CD4-positive, alpha-beta memory T cell (primary cell): ENCODE measurements at regions of chr2 and their contacts with region 1.

Region 1: GRCh38 chr2:156589381-156590079 is 153.4 kb downstream of the GPD2 start:
- DNase-seq: peak; percentile 31 to 48 (median 37)
- H3K4me3 ChIP-seq: no peak overlapping the region
- H3K4me3 Mint-ChIP-seq: no peak overlapping the region
- H3K27ac ChIP-seq: no peak overlapping the region
- H3K27ac Mint-ChIP-seq: peak overlapping the region in 1 of 7 donors; percentile 2
- H3K4me1 ChIP-seq: no peaks in the 10 kb centered on the region
- H3K4me1 Mint-ChIP-seq: peaks cover 0 to 2% (median under 1%) of the 10 kb centered on the region in 4 donors
- H3K27me3 ChIP-seq: no peaks in the 10 kb centered on the region
- H3K27me3 Mint-ChIP-seq: no peaks in the 10 kb centered on the region

Region 2: DNA sequence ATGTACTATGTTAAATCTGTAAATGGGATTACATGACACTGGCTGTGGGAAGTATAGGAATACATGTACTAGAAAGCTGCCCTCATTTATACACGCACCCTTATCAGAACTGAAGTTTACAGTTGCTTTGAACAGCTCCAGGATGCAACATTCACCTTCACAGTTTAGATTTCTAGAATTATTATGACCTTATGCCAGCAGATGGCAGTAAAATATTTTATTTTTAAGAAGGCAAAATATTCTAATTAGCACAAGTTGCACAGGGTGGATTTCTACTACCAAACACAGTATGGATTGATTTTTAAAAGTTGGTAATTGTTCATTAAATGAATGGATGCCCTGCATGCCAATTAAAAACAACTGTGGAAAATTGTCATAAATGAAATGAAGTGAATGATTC is 1220.6 kb before region 1 on chr2:
- CTCF ChIA-PET with region 1: interaction called, 5 read pairs
- POLR2A ChIA-PET with region 1: no interaction called
- intact Hi-C with region 1: loop called (anchors 1 kb)
- DNase-seq: peak in 2 of 5 donors; percentile 3 to 11
- H3K4me3 ChIP-seq: no peak overlapping the region
- H3K4me3 Mint-ChIP-seq: no peak overlapping the region
- H3K27ac ChIP-seq: no peak overlapping the region
- H3K27ac Mint-ChIP-seq: no peak overlapping the region
- H3K4me1 ChIP-seq: no peaks in the 10 kb centered on the region
- H3K4me1 Mint-ChIP-seq: no peaks in the 10 kb centered on the region
- H3K27me3 ChIP-seq: no peaks in the 10 kb centered on the region
- H3K27me3 Mint-ChIP-seq: no peaks in the 10 kb centered on the region

Region 3: GRCh38 chr2:155377266-155377680 is 1212.3 kb before region 1 on chr2:
- CTCF ChIA-PET with region 1: interaction called, 23 read pairs
- POLR2A ChIA-PET with region 1: no interaction called
- intact Hi-C with region 1: loop called (anchors 1 kb)
- DNase-seq: peak in 1 of 5 donors; percentile 3
- H3K4me3 ChIP-seq: no peak overlapping the region
- H3K4me3 Mint-ChIP-seq: no peak overlapping the region
- H3K27ac ChIP-seq: no peak overlapping the region
- H3K27ac Mint-ChIP-seq: no peak overlapping the region
- H3K4me1 ChIP-seq: no peaks in the 10 kb centered on the region
- H3K4me1 Mint-ChIP-seq: peaks cover 0 to 2% (median 1%) of the 10 kb centered on the region in 4 donors
- H3K27me3 ChIP-seq: no peaks in the 10 kb centered on the region
- H3K27me3 Mint-ChIP-seq: no peaks in the 10 kb centered on the region

Region 4: DNA sequence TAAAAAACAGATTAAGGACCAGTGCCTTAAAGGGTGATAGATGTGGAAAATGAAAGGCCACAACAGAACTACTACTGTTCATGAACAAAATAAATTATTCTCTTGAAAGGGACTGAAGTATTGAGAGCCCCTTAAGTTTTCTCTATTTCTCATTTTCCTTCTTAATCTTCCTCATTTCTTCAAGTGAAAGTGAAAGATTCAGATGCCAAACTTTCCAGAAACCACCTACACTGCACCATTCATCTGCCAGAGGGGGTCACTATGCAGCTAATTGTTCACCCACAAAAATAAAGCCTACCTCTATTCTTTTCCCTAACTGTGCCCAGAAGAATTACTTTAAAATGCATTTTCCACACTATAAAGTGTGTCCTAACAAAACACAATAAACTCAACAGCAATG is 397.1 kb before region 1 on chr2:
- CTCF ChIA-PET with region 1: interaction called, 14 read pairs
- POLR2A ChIA-PET with region 1: no interaction called
- intact Hi-C with region 1: loop called (anchors 1 kb)
- DNase-seq: peak in 1 of 5 donors; percentile 5
- H3K4me3 ChIP-seq: no peak overlapping the region
- H3K4me3 Mint-ChIP-seq: no peak overlapping the region
- H3K27ac ChIP-seq: no peak overlapping the region
- H3K27ac Mint-ChIP-seq: peak overlapping the region in 1 of 7 donors; percentile 20
- H3K4me1 ChIP-seq: no peaks in the 10 kb centered on the region
- H3K4me1 Mint-ChIP-seq: no peaks in the 10 kb centered on the region
- H3K27me3 ChIP-seq: no peaks in the 10 kb centered on the region
- H3K27me3 Mint-ChIP-seq: peaks cover 0 to under 1% of the 10 kb centered on the region in 2 donors

Region 5: GRCh38 chr2:156341452-156342253 is 247.9 kb before region 1 on chr2:
- CTCF ChIA-PET with region 1: interaction called, 10 read pairs
- POLR2A ChIA-PET with region 1: no interaction called
- intact Hi-C with region 1: no loop called
- DNase-seq: peak; percentile 86 to 94 (median 87)
- H3K4me3 ChIP-seq: peak overlapping the region; percentile 66 to 91
- H3K4me3 Mint-ChIP-seq: peak overlapping the region; percentile 90 to 99 (median 96)
- H3K27ac ChIP-seq: peak overlapping the region; percentile 99
- H3K27ac Mint-ChIP-seq: peak overlapping the region; percentile 95 to 100 (median 99)
- H3K4me1 ChIP-seq: peaks cover 37% of the 10 kb centered on the region
- H3K4me1 Mint-ChIP-seq: peaks cover 21 to 48% (median 33%) of the 10 kb centered on the region in 4 donors
- H3K27me3 ChIP-seq: no peaks in the 10 kb centered on the region
- H3K27me3 Mint-ChIP-seq: peaks cover 0 to 2% of the 10 kb centered on the region in 2 donors

Region 6: GRCh38 chr2:156400706-156401678 is 188.5 kb before region 1 on chr2:
- CTCF ChIA-PET with region 1: interaction called, 3 read pairs
- POLR2A ChIA-PET with region 1: no interaction called
- intact Hi-C with region 1: loop called (anchors 10 kb)
- DNase-seq: peak; percentile 84 to 88 (median 87)
- H3K4me3 ChIP-seq: peak overlapping the region; percentile 89 to 90
- H3K4me3 Mint-ChIP-seq: peak overlapping the region; percentile 89 to 99 (median 92)
- H3K27ac ChIP-seq: peak overlapping the region; percentile 87
- H3K27ac Mint-ChIP-seq: peak overlapping the region; percentile 93 to 100 (median 98)
- H3K4me1 ChIP-seq: peaks cover 8% of the 10 kb centered on the region
- H3K4me1 Mint-ChIP-seq: peaks cover 15 to 36% (median 21%) of the 10 kb centered on the region in 4 donors
- H3K27me3 ChIP-seq: no peaks in the 10 kb centered on the region
- H3K27me3 Mint-ChIP-seq: peaks cover 0 to 8% of the 10 kb centered on the region in 2 donors

Region 7: DNA sequence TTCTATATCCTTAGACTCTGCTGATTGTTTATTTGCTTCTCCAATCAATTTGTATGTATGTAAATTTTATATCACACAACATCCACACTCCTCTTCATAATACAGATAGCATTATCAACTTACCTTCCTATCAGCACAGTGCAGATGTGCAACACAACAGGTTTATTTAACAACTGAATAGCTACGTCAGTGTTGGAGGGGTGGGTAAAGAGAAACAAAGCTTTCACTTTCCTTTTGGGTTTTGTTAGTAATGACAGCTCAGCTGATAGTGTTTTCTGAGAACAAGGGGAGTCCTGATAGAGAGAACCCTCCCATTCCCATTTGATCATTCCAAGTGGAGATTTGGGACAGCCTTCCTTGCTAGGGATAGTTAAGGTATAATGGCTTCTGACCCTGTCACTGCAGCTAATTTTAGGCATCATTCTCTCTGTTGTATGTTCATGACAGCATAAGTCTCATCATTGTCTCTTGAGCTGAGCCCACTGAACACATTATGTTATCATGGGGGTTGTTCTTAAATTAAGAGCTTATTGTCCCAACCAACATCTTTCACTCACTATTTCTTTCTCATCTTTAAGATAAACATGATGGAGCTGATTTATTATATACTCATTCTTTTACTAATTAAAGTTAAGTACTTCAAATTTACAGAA is 74.4 kb after region 1 on chr2:
- CTCF ChIA-PET with region 1: no interaction called
- POLR2A ChIA-PET with region 1: no interaction called
- intact Hi-C with region 1: no loop called
- DNase-seq: peak in 1 of 5 donors; percentile 11
- H3K4me3 ChIP-seq: no peak overlapping the region
- H3K4me3 Mint-ChIP-seq: peak overlapping the region; percentile 7 to 73 (median 16)
- H3K27ac ChIP-seq: no peak overlapping the region
- H3K27ac Mint-ChIP-seq: peak overlapping the region in 1 of 7 donors; percentile 51
- H3K4me1 ChIP-seq: no peaks in the 10 kb centered on the region
- H3K4me1 Mint-ChIP-seq: peaks cover 0 to 6% (median 2%) of the 10 kb centered on the region in 4 donors
- H3K27me3 ChIP-seq: no peaks in the 10 kb centered on the region
- H3K27me3 Mint-ChIP-seq: peaks cover 0 to 3% of the 10 kb centered on the region in 2 donors